Sigmoid colon (tissue), 7 donors: ENCODE measurements at regions of chr6 and their contacts with region 1.

Region 1: GRCh38 chr6:117602151-117602898 is at the start of gene GOPC:
- DNase-seq: peak; percentile 98
- H3K4me3 ChIP-seq: peak within 1 kb of the TSS; percentile 78 to 99 (median 87)
- H3K27ac ChIP-seq: peak within 1 kb of the TSS; percentile 80 to 91 (median 84)
- H3K4me1 ChIP-seq: peaks cover 0 to 35% (median 27%) of the 10 kb centered on the region in 4 donors
- H3K27me3 ChIP-seq: no peaks in the 10 kb centered on the region
- CTCF ChIP-seq: no peak
- EP300 ChIP-seq: no peak
- POLR2A ChIP-seq: peak; percentile 75 to 87
- total RNA-seq, gene GOPC: 26.0 to 28.1 (median 26.1) TPM

Region 2: GRCh38 chr6:116954938-116955337 is 647.4 kb before region 1 on chr6:
- intact Hi-C with region 1: no loop called
- DNase-seq: no peak
- H3K4me3 ChIP-seq: no peak overlapping the region
- H3K27ac ChIP-seq: no peak overlapping the region
- H3K4me1 ChIP-seq: no peaks in the 10 kb centered on the region
- H3K27me3 ChIP-seq: no peaks in the 10 kb centered on the region
- CTCF ChIP-seq: no peak
- EP300 ChIP-seq: no peak
- POLR2A ChIP-seq: no peak

Region 3: GRCh38 chr6:117346142-117346930 is 256.0 kb before region 1 on chr6:
- intact Hi-C with region 1: loop called (anchors 5 kb)
- DNase-seq: no peak
- H3K4me3 ChIP-seq: no peak overlapping the region
- H3K27ac ChIP-seq: no peak overlapping the region
- H3K4me1 ChIP-seq: no peaks in the 10 kb centered on the region
- H3K27me3 ChIP-seq: no peaks in the 10 kb centered on the region
- CTCF ChIP-seq: peak in 2 of 4 experiments; percentile 18 to 48
- EP300 ChIP-seq: no peak
- POLR2A ChIP-seq: no peak

Region 4: DNA sequence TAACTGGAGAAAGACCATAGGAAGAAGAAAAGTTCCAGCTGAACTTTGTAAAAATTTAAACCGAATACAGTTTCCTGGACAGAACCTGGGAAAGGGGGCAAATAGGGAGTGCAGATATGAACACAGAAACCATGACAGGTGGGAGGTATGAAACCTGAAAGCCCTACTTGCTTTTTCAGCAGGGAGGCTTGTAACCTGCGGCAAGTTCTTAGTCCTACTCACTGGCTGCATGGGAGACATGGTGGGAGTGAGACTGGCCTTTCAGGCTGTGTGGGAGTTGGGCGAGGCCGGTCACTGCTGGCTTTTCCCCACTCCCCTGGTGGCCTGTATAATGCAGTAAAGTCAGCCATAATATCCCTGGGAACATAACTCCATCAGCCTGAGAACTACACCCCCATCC is 230.8 kb before region 1 on chr6:
- intact Hi-C with region 1: no loop called
- DNase-seq: no peak
- H3K4me3 ChIP-seq: no peak overlapping the region
- H3K27ac ChIP-seq: no peak overlapping the region
- H3K4me1 ChIP-seq: no peaks in the 10 kb centered on the region
- H3K27me3 ChIP-seq: no peaks in the 10 kb centered on the region
- CTCF ChIP-seq: no peak
- EP300 ChIP-seq: no peak
- POLR2A ChIP-seq: no peak

Region 5: GRCh38 chr6:117432273-117432672 is 170.1 kb before region 1 on chr6:
- intact Hi-C with region 1: no loop called
- DNase-seq: no peak
- H3K4me3 ChIP-seq: no peak overlapping the region
- H3K27ac ChIP-seq: no peak overlapping the region
- H3K4me1 ChIP-seq: no peaks in the 10 kb centered on the region
- H3K27me3 ChIP-seq: no peaks in the 10 kb centered on the region
- CTCF ChIP-seq: no peak
- EP300 ChIP-seq: no peak
- POLR2A ChIP-seq: no peak

Region 6: GRCh38 chr6:117482240-117483003 is 119.9 kb before region 1 on chr6 and contains the start of gene DCBLD1:
- intact Hi-C with region 1: loop called (anchors 10 kb)
- DNase-seq: peak; percentile 82
- H3K4me3 ChIP-seq: peak within 1 kb of the TSS; percentile 57 to 82 (median 76)
- H3K27ac ChIP-seq: peak within 1 kb of the TSS; percentile 81 to 88 (median 84)
- H3K4me1 ChIP-seq: peaks cover 0 to 23% (median 14%) of the 10 kb centered on the region in 4 donors
- H3K27me3 ChIP-seq: no peaks in the 10 kb centered on the region
- CTCF ChIP-seq: no peak
- EP300 ChIP-seq: no peak
- POLR2A ChIP-seq: no peak
- total RNA-seq, gene DCBLD1: 5.8 to 16.3 (median 9.7) TPM

Region 7: DNA sequence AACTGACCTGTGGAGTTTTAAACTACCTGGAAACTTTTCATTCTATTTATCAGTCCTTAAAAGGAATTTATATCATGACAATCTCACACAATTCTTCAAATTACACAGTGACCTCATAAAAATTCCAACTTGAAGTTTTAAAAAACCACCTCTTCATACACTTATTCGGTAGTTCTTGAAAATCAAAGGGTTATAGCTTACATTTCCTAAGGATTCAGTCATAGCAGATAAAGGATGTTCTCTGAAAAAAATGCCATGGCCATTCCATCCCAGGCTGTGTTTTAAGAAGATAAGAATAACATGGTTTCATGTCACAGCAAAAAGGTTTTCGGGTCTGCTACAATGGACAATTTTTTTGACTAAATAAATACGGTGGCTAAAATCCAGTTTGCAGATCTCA is 41.2 kb before region 1 on chr6:
- intact Hi-C with region 1: loop called (anchors 5 kb)
- DNase-seq: no peak
- H3K4me3 ChIP-seq: no peak overlapping the region
- H3K27ac ChIP-seq: no peak overlapping the region
- H3K4me1 ChIP-seq: no peaks in the 10 kb centered on the region
- H3K27me3 ChIP-seq: no peaks in the 10 kb centered on the region
- CTCF ChIP-seq: no peak
- EP300 ChIP-seq: no peak
- POLR2A ChIP-seq: no peak

Region 8: DNA sequence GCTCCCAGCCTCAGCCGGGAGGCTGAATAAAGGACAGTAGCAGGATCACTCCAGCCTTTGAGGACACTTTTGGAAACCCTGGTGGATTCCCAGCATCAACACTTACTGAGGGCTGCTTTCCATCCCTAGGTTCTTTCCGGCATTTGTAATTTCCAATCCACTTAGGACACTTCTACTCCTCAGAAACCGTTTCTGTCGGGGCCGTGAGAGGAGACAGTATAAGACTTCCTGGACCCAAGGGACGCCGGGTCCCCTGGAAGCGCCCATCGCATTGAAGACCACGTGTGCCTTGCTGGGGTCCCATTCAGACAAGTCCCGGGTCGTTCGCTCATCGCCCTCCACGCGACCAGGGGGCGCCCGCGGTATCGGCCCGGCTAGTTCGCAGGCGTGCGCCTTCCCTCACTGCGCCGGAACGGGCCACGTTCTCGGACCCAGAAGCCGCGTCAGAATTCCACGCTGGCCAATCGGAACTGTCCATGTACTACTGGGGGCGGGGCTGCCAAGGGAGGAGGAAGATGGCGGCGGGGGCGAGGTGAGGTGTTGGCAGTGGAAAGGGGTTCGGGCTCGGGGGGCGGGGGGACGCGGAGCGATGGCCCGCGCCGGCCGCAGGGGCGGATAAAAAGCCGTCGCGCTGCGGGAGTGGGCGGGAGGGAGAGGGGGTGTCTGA is 72.8 kb after region 1 on chr6 and contains the start of gene NUS1:
- intact Hi-C with region 1: loop called (anchors 2 kb)
- DNase-seq: peak; percentile 98
- H3K4me3 ChIP-seq: peak within 1 kb of the TSS; percentile 60 to 71 (median 70)
- H3K27ac ChIP-seq: peak within 1 kb of the TSS; percentile 76 to 84 (median 80)
- H3K4me1 ChIP-seq: peaks cover 0 to 43% (median 30%) of the 10 kb centered on the region in 4 donors
- H3K27me3 ChIP-seq: no peaks in the 10 kb centered on the region
- CTCF ChIP-seq: peak; percentile 45 to 71 (median 52)
- EP300 ChIP-seq: no peak
- POLR2A ChIP-seq: peak in 1 of 2 donors; percentile 24
- total RNA-seq, gene NUS1: 22.2 to 31.4 (median 25.1) TPM